Common myeloid progenitor, CD34-positive (primary cell): ENCODE measurements at regions of chr19 and their contacts with region 1.

Region 1: GRCh38 chr19:56333505-56333904 is 18.9 kb upstream of the ZSCAN5A start:
- DNase-seq: peak; percentile 66 to 85 (median 79)
- H3K4me3 ChIP-seq: no peak overlapping the region
- H3K27ac ChIP-seq: no peak overlapping the region
- H3K4me1 ChIP-seq: no peaks in the 10 kb centered on the region
- H3K27me3 ChIP-seq: no peaks in the 10 kb centered on the region

Region 2: DNA sequence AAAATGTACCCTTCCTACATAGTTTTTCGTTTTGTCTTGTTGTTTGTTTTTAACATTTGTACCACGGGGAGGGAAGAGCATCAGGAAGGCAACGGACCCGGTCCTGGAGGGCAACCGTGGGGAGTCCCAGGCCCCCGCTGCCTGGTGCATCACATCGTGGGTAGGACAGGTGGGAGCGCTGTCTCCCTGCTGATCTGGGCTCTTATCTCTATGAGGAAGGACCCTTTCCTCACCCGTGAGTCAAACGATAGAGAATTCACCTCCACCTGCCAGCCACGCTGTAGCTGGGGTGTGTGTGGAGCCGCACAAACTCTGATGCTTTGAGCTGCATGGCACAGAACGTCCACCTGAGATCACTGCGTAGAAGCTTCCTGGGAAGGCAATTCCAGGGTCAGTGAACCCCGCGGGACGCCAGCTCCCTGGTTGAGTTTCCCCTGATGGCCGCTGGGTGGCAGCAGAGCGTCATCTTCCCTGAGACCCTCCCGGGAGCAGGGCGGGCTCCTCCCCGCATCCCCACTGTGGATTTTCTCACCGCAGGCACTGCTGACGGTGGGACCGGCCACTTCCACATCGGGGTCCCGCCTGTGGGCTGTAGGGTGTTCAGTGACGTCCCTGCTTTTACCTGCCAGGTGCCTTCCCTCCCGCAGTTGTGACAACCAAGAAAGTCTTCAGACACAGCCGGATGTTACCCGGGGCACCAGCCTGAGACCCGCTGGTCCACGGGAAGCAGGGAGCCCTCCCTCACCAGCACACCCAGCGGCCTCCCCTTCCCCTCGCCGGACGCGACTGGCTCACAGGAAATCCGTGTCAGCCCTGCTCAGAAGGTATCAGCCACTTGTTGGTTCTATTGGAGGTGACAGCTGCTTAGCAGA is 267.1 kb before region 1 on chr19:
- CTCF ChIA-PET with region 1: interaction called, 16 read pairs
- POLR2A ChIA-PET with region 1: no interaction called
- DNase-seq: peak; percentile 69 to 84 (median 74)
- H3K4me3 ChIP-seq: peak overlapping the region; percentile 11 to 86 (median 69)
- H3K27ac ChIP-seq: no peak overlapping the region
- H3K4me1 ChIP-seq: peaks cover 0 to 14% (median 10%) of the 10 kb centered on the region in 4 experiments
- H3K27me3 ChIP-seq: peaks cover 0 to 11% (median 3%) of the 10 kb centered on the region in 5 experiments

Region 3: GRCh38 chr19:56080669-56081401 is 252.7 kb before region 1 on chr19:
- CTCF ChIA-PET with region 1: interaction called, 14 read pairs
- POLR2A ChIA-PET with region 1: no interaction called
- DNase-seq: peak; percentile 77 to 90 (median 89)
- H3K4me3 ChIP-seq: peak overlapping the region; percentile 11 to 63 (median 50)
- H3K27ac ChIP-seq: no peak overlapping the region
- H3K4me1 ChIP-seq: peaks cover 0 to 12% (median 10%) of the 10 kb centered on the region in 4 experiments
- H3K27me3 ChIP-seq: peaks cover 0 to 5% (median 0%) of the 10 kb centered on the region in 5 experiments

Region 4: DNA sequence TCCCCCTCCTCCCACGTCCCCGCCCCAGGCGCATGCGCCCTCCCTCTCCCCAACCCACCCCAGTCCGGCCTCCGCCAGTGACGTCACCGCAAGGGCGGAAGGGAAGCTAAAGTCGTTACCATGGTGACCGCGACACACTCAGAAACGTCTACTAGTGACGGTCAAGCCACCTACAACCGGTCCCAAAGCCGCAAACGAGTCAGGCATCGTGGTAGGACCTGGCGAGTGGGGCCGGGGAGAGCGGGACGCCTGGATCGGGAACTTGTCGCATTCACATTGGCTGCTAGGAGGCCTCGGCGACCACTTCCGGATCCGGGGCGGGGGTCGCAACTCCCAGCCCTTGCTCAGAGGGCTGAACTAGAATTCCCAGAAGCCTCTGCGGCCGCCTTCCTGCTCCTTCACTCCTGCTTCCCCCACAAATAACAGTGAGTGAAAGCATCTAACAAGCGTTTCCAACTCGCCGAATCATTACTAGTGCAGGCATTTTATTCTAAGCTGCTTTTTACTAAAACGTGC is 18.9 kb before region 1 on chr19 and contains the start of gene ZSCAN5A:
- CTCF ChIA-PET with region 1: interaction called, 31 read pairs
- POLR2A ChIA-PET with region 1: no interaction called
- DNase-seq: peak; percentile 97
- H3K4me3 ChIP-seq: peak within 1 kb of the TSS; percentile 41 to 95 (median 90)
- H3K27ac ChIP-seq: peak within 1 kb of the TSS; percentile 98 to 99
- H3K4me1 ChIP-seq: peaks cover 12 to 43% (median 32%) of the 10 kb centered on the region in 4 experiments
- H3K27me3 ChIP-seq: no peaks in the 10 kb centered on the region

Region 5: DNA sequence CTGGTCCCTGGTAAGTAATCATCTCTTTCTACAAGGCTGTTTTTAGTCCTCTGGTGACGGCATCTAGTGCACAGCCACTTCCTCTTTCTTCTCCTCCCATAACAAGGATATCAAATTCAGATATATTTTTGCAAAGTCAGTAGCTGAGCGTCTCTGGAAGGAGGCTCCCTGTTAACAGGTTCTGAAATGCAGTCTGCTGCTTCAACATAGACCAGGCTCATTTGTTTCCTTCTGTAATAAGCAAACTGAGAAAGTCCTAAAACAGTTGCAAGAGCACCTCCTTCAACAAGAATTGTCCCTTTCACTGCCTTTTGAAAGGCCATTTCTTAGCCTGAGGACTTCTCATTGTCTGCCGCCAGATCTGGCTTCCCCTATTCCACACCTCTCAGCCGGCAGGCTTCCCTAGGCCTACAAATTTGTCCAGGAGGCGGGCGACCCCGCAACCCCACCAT is 11.5 kb before region 1 on chr19:
- CTCF ChIA-PET with region 1: interaction called, 17 read pairs
- POLR2A ChIA-PET with region 1: no interaction called
- DNase-seq: peak; percentile 64 to 88 (median 82)
- H3K4me3 ChIP-seq: peak overlapping the region in 3 of 7 experiments; percentile 1 to 41 (median 8)
- H3K27ac ChIP-seq: peak overlapping the region; percentile 53 to 83
- H3K4me1 ChIP-seq: peaks cover 18 to 56% (median 44%) of the 10 kb centered on the region in 4 experiments
- H3K27me3 ChIP-seq: no peaks in the 10 kb centered on the region

Region 6: DNA sequence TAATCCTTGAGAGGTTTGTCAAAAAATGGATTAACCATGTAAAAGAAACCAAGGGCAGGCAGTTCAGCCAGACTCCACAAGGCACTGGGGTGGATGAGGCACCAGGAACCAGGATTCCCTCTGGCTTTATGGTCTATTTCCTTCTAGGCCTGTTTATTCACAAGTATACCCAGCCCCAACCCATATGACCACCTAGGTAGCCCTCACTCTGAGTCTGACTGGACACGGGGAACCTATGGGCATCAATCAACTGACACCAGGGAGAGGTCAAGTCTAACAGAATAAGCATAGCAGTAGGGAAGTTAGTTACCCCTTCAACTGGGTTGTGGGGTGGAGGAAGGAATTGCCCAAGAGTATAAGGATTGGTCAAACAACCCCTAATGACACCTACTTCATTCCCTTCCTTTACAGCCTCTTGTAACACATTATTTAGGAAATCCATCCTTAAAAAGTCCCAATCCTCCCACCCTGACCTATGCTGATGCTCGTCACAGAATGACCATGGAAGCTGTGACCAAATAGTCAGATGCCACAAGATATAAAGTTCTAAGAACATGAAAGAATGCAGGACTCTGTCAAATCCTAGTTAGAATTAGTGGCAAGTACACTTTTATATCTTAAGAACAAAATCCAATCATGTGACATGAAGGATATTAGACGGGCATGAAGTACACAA is 475.4 kb after region 1 on chr19:
- CTCF ChIA-PET with region 1: no interaction called
- POLR2A ChIA-PET with region 1: no interaction called
- DNase-seq: no peak
- H3K4me3 ChIP-seq: no peak overlapping the region
- H3K27ac ChIP-seq: no peak overlapping the region
- H3K4me1 ChIP-seq: no peaks in the 10 kb centered on the region
- H3K27me3 ChIP-seq: no peaks in the 10 kb centered on the region